Left colon (tissue), 2 donors: ENCODE measurements at regions of chr1 and their contacts with region 1.

Region 1: GRCh38 chr1:174769961-174770549 is 229.7 kb upstream of the CACYBP start:
- DNase-seq: no peak
- ATAC-seq: peak; percentile 59

Region 2: DNA sequence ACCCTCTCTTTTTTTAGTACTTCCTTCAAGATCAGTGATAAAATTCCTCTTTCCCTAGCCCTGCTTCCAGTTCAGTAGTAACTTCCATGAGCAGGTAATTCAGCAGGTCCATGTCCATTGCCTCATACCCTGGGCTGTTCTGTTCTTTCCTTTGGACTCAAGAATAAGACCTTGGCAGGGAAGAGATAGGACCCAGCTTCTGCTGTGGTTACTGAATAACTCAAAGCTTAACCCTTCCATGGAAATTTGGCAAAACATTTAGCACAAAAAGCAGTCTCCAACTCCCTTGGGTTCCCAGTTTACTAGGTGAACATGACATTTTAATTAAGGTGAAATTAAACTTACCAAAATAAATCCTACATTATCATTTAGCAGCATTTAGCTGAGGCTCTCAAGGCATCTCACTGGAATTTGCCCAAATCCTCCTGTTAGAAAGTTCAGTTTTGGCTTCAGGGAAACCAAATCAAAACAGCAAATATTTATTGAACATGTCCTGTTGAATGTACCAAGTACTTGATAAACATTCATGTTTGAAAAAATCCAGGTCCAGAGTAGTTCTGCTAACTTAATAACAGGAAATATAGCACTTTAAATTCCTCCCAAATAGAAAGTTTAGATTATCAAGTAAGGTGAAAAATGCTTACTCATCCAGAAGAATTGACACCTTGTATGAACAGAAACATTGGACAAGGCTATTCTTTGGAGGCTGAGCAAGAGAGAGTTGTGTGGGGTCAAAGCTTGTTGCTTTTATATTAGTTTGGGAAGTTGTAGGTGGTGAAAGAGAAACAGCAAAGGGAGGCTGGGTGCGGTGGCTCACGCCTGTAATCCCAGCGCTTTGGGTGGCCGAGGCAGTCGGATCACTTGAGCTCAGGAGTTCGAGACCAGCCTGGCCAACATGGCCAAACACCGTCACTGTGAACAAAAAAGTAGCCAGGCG is 844.5 kb before region 1 on chr1:
- intact Hi-C with region 1: no loop called
- DNase-seq: no peak
- ATAC-seq: peak; percentile 45

Region 3: GRCh38 chr1:174982971-174983689 is 213.1 kb after region 1 on chr1:
- intact Hi-C with region 1: loop called in 1 of 2 experiments (anchors 5 kb)
- DNase-seq: no peak
- ATAC-seq: peak; percentile 28

Region 4: GRCh38 chr1:174999216-174999925 is 229.3 kb after region 1 on chr1:
- intact Hi-C with region 1: no loop called
- DNase-seq: peak; percentile 98 to 99
- ATAC-seq: peak; percentile 81